ENCODE measurements at regions of chr13 and their contacts with region 1.

Region 1: DNA sequence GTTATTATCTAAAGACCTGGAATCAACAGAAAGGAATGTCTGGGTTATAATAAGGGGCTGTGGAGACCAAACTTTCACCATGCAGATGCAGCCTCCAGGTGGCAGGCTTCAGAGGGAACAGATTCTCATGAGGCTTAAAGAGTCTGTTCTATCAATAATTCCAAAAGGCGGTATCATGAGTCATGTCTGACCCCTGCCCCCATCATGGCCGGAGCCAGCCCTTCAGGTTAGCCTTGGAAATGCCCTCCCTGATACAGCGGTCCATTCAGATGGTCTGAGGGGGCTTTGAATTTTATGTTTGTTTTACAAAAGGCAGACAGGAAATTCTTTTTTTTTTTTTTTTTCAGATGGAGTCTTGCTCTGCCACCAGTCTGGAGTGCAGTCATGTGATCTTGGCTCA is 21.7 kb upstream of the LAMP1 start:
- DNase-seq: peak; percentile 75
- ATAC-seq: peak; percentile 82
- H3K4me3 ChIP-seq: no peak overlapping the region
- H3K27ac ChIP-seq: no peak overlapping the region
- H3K4me1 ChIP-seq: peaks cover 3% of the 10 kb centered on the region
- H3K27me3 ChIP-seq: no peaks in the 10 kb centered on the region
- CTCF ChIP-seq: peak; percentile 64
- POLR2A ChIP-seq: no peak
- RAD21 ChIP-seq: peak; percentile 64

Region 2: DNA sequence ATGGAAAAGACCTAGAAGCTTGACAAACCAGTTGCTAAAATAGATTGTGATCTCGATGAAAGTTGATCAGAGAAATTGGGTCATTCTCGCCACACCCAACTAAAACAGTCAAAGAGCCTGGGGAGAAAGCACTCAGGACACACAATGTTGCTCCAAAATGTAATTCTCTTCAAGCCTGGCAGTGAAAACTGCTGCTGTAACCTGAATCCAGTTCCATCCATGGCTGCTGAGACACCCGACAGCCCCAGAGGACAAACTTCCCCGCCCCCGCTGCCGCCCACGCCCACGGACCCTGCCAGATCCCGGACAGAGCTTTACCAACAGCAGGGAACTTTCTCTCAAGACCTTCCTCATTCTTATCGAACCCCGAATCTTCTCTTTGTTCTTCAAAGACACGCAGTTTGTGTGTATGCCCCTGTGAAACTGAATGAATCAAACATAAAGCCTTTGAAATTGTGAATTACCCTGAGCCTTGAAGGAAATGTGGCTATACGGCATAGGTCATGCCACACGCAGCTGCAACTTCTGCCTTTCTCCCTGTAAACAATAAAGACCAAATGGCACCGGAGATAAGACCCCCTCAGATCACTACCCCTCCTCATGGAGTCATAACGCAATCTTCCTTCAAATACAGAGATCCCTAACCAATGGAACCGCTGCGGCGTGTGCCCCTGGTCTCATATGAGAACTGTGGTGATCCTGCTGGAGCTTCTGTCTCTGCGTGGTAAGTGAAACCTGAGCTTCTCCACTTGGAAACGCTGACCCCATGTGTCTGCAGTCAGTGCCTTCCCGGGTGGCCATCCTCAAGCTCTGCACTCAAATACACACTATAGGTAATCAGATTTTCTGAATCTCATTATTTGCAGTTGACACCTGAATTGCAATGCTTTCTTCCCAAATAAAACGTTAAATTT is 16.8 kb after region 1 on chr13:
- CTCF ChIA-PET with region 1: interaction called, 5 read pairs
- POLR2A ChIA-PET with region 1: no interaction called
- dilution Hi-C with region 1: no loop called
- in situ Hi-C with region 1: no loop called
- intact Hi-C with region 1: loop called (anchors 1 kb)
- DNase-seq: peak; percentile 51
- ATAC-seq: peak; percentile 62
- H3K4me3 ChIP-seq: peak overlapping the region; percentile 46
- H3K27ac ChIP-seq: no peak overlapping the region
- H3K4me1 ChIP-seq: no peaks in the 10 kb centered on the region
- H3K27me3 ChIP-seq: peaks cover 17% of the 10 kb centered on the region
- CTCF ChIP-seq: no peak
- POLR2A ChIP-seq: no peak
- RAD21 ChIP-seq: peak; percentile 8; the same call in 1 of the 2 replicates

Region 3: DNA sequence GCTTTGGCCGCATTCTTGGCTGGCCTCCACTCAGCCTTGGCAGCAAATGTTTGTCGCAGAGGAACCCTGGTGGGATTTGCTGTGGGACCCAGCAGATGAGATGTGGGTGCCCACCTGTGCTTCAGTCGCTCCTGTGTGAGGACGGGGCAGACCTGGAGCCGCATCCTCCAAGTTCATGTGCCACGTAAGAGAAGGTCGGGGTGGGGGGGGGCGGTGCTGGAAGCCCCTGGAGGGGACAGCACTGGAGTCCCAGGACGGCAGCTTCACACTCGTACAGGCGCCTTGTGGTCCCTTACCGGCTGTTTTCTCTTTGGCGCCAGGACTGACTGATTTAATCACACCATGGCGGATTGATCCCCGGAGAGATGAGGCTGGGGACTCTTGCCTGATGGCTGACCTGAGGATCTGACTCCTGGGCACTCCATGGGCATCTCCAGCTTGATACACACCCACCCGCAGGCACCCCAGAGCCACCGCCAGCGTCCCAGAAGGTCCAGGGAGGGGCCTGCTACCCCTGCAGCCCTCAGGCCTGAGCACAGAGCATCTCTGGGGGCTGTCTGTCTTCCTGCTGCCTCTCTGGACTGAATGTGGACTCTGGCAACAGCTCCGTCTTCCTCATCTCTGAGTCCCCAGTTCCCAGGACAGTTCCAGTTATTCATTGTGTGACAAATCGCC is 98.6 kb after region 1 on chr13:
- CTCF ChIA-PET with region 1: interaction called, 3 read pairs
- POLR2A ChIA-PET with region 1: no interaction called
- dilution Hi-C with region 1: no loop called
- in situ Hi-C with region 1: no loop called
- intact Hi-C with region 1: loop called (anchors 1 kb)
- DNase-seq: no peak
- ATAC-seq: no peak
- H3K4me3 ChIP-seq: no peak overlapping the region
- H3K27ac ChIP-seq: no peak overlapping the region
- H3K4me1 ChIP-seq: no peaks in the 10 kb centered on the region
- H3K27me3 ChIP-seq: peaks cover 27% of the 10 kb centered on the region
- CTCF ChIP-seq: no peak
- POLR2A ChIP-seq: no peak
- RAD21 ChIP-seq: no peak

Region 4: GRCh38 chr13:113393563-113394338 is 118.4 kb after region 1 on chr13:
- CTCF ChIA-PET with region 1: no interaction called
- POLR2A ChIA-PET with region 1: no interaction called
- dilution Hi-C with region 1: no loop called
- in situ Hi-C with region 1: no loop called
- intact Hi-C with region 1: loop called (anchors 1 kb)
- DNase-seq: peak; percentile 59
- ATAC-seq: peak; percentile 97
- H3K4me3 ChIP-seq: peak overlapping the region; percentile 89
- H3K27ac ChIP-seq: peak overlapping the region; percentile 73
- H3K4me1 ChIP-seq: peaks cover 4% of the 10 kb centered on the region; the same call in 1 of the 2 replicates
- H3K27me3 ChIP-seq: no peaks in the 10 kb centered on the region
- CTCF ChIP-seq: peak; percentile 85
- POLR2A ChIP-seq: no peak
- RAD21 ChIP-seq: peak; percentile 88

Region 5: DNA sequence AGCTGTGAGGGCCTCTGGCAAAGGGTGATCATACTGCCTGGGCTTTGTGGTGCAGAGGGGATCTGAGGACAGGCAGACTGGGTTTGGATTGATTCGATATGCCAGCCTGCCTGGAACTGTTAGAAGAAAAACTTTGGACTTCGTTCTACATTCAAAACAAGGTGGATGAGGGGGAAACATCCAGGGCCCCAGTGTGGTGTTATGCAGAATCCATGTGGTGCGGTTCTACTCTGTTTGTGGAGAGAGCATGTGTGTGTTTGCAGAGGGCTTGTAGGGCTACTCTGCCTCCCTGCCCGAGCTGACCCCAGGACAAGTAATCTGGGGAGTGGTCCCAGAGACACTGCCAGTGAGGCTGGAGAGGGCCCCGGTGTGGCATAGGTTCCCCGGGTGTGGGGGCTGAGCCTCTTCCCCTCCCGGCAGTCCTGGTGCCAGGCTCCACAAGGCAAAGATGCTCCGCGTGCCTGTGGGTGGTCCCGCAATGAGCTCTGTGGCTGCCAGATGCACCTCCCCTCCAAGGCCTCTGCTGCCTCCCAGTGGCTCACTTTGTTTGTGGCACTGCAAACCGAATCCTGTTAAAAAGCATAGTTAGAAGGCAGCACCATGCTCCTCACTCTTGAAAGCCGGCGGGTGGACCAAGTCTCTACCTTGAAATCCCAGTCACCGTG is 286.8 kb after region 1 on chr13:
- CTCF ChIA-PET with region 1: no interaction called
- POLR2A ChIA-PET with region 1: no interaction called
- dilution Hi-C with region 1: no loop called
- in situ Hi-C with region 1: no loop called
- intact Hi-C with region 1: loop called (anchors 2 kb)
- DNase-seq: peak; percentile 76
- ATAC-seq: peak; percentile 96
- H3K4me3 ChIP-seq: no peak overlapping the region
- H3K27ac ChIP-seq: no peak overlapping the region
- H3K4me1 ChIP-seq: no peaks in the 10 kb centered on the region
- H3K27me3 ChIP-seq: peaks cover 15% of the 10 kb centered on the region
- CTCF ChIP-seq: peak; percentile 90
- POLR2A ChIP-seq: no peak
- RAD21 ChIP-seq: peak; percentile 84

Region 6: GRCh38 chr13:114151565-114152284 is 876.3 kb after region 1 on chr13:
- CTCF ChIA-PET with region 1: no interaction called
- POLR2A ChIA-PET with region 1: no interaction called
- dilution Hi-C with region 1: no loop called
- in situ Hi-C with region 1: no loop called
- intact Hi-C with region 1: no loop called
- DNase-seq: no peak
- ATAC-seq: no peak
- H3K4me3 ChIP-seq: no peak overlapping the region
- H3K27ac ChIP-seq: no peak overlapping the region
- H3K4me1 ChIP-seq: no peaks in the 10 kb centered on the region
- H3K27me3 ChIP-seq: peaks cover 23% of the 10 kb centered on the region
- CTCF ChIP-seq: no peak
- POLR2A ChIP-seq: no peak
- RAD21 ChIP-seq: no peak

Measured in IMR-90 (cell line).